ENCODE measurements at regions of chr11 and their contacts with region 1.

Region 1: GRCh38 chr11:80698648-80699047 is 1257.8 kb upstream of the TENM4 start:
- DNase-seq: no peak
- ATAC-seq: no peak

Region 2: GRCh38 chr11:81197396-81197795 is 498.7 kb after region 1 on chr11:
- intact Hi-C with region 1: loop called (anchors 2 kb)
- DNase-seq: no peak
- ATAC-seq: no peak